ENCODE measurements at regions of chr1 and their contacts with region 1.

Region 1: GRCh38 chr1:116359060-116359830 is 13.8 kb upstream of the ATP1A1 start:
- DNase-seq: no peak
- ATAC-seq: no peak

Region 2: GRCh38 chr1:116147972-116148371 is 211.3 kb before region 1 on chr1:
- intact Hi-C with region 1: no loop called
- DNase-seq: no peak
- ATAC-seq: no peak

Region 3: DNA sequence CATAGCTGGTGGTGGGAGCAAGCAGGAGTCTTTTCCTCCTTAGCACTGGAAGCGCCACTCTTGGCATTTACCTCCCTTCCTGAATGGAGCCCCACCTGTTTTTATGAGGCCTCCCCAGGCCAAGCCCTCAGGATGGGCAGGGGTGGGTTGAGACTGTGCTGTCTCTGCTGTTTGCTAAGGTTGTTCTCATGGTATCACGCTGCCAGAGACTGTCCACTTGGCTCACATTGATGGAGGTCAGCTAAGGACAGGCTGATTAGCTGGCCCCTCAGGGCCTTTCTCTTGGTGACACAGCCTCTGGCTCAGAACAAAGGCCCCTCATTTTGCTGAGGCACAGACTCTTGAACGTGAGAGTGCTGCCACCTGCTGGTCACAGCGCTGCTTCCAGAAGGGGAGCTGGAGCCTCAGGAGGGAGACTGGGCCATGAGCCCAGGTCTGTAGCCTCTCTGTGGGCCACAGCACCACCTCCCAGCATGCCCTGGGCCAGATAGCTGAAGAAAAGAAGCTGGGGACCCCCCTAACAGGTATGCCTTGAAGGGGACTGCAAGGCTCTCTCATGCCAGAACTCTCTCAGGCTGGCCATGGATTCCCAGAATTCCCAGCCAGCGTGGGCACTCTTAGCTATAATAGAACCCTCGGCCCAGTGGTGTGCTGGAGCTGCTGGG is 126.0 kb after region 1 on chr1:
- intact Hi-C with region 1: loop called (anchors 5 kb)
- DNase-seq: peak; percentile 94
- ATAC-seq: peak; percentile 92